ENCODE measurements at regions of chr4 and their contacts with region 1.

Region 1: DNA sequence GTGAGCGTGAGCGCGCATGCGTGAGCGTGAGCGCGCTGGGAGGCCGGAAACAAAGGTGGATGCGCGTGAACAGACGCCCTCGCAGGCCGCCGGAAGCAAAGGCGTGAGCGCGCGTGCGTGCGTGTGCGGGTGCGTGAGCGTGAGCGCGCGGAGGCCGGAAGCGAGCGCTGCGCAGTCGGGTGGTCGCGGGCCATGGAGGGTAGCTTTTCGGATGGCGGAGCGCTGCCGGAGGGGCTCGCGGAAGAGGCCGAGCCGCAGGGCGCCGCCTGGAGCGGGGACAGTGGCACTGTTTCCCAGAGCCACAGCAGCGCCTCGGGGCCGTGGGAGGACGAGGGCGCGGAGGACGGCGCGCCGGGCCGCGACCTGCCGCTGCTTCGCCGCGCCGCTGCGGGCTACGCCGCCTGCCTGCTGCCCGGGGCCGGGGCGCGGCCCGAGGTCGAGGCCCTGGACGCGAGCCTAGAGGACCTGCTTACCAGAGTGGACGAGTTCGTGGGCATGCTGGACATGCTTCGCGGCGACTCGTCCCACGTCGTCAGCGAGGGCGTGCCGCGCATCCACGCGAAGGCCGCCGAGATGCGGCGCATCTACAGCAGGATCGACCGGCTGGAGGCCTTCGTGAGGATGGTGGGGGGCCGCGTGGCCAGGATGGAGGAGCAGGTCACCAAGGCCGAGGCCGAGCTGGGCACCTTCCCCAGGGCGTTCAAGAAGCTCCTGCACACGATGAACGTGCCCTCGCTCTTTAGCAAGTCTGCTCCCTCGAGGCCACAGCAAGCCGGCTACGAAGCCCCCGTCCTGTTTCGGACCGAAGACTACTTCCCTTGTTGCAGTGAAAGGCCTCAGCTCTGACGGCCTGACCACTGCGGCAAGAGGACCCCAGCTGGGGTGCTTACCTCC is at the start of gene BLOC1S4:
- DNase-seq: peak; percentile 86
- ATAC-seq: peak; percentile 66
- H3K4me3 ChIP-seq: peak within 1 kb of the TSS; percentile 89
- H3K27ac ChIP-seq: peak within 1 kb of the TSS; percentile 54
- H3K4me1 ChIP-seq: peaks cover 9% of the 10 kb centered on the region
- H3K27me3 ChIP-seq: no peaks in the 10 kb centered on the region
- CTCF ChIP-seq: no peak
- total RNA-seq, gene BLOC1S4: 14.0 and 19.9 TPM in 2 replicates

Region 2: DNA sequence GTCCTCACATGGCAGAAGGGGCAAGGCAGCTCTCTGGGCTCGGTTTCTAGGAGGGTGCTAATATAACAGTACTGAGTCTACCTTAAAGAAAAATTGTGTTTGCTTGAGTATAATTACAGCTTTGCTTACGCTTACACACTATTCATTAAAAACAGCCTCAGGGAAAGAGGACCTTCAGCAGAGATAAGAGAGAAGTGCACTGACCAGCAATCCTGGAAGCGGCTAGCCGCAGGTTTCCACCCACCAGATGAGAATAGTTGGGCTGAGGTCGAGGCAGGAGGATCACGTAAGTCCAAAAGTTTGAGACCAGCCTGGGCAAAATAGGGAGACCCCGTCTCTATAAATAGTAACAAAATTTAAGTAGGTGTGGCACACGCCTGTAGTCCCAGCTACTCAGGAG is 91.0 kb before region 1 on chr4:
- CTCF ChIA-PET with region 1: no interaction called
- POLR2A ChIA-PET with region 1: no interaction called
- intact Hi-C with region 1: no loop called
- DNase-seq: no peak
- ATAC-seq: no peak
- H3K4me3 ChIP-seq: no peak overlapping the region
- H3K27ac ChIP-seq: no peak overlapping the region
- H3K4me1 ChIP-seq: no peaks in the 10 kb centered on the region
- H3K27me3 ChIP-seq: no peaks in the 10 kb centered on the region
- CTCF ChIP-seq: no peak

Region 3: DNA sequence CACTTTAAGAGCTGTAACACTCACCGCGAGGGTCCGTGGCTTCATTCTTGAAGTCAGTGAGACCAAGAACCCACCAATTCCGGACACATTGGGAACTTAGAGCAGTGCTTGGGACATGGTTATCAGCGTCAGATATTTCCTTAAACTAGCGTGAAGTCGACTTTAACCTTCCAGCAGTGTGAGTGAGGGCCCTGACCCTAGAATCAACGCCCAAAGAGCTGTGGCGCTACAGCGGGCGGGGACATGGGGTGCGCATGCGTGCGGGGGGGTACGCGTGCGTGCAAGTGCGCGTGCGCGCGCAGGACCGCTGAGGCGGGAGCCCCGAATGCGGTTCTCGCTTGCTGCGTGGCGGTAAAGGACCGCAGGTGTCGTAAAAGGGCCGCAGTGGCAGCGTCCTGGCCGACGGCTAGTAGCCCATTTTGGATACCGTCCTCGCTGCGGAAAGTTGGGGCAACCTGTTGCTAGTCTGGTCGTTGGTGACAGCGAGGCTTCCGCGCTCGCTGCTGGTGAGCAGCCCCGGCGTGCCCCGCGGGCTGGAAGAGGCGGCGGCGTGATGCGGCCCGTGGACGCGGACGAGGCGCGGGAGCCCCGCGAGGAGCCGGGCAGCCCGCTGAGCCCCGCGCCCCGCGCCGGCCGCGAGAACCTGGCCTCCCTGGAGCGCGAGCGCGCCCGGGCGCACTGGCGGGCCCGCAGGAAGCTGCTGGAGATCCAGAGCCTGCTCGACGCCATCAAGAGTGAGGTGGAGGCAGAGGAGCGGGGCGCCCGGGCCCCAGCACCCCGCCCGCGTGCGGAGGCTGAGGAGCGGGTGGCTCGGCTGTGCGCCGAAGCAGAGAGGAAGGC is 42.4 kb before region 1 on chr4:
- CTCF ChIA-PET with region 1: no interaction called
- POLR2A ChIA-PET with region 1: interaction called, 6 read pairs
- intact Hi-C with region 1: loop called (anchors 2 kb)
- DNase-seq: peak; percentile 91
- ATAC-seq: peak; percentile 74
- H3K4me3 ChIP-seq: peak overlapping the region; percentile 72
- H3K27ac ChIP-seq: peak overlapping the region; percentile 78
- H3K4me1 ChIP-seq: peaks cover 24% of the 10 kb centered on the region
- H3K27me3 ChIP-seq: no peaks in the 10 kb centered on the region
- CTCF ChIP-seq: no peak

Region 4: DNA sequence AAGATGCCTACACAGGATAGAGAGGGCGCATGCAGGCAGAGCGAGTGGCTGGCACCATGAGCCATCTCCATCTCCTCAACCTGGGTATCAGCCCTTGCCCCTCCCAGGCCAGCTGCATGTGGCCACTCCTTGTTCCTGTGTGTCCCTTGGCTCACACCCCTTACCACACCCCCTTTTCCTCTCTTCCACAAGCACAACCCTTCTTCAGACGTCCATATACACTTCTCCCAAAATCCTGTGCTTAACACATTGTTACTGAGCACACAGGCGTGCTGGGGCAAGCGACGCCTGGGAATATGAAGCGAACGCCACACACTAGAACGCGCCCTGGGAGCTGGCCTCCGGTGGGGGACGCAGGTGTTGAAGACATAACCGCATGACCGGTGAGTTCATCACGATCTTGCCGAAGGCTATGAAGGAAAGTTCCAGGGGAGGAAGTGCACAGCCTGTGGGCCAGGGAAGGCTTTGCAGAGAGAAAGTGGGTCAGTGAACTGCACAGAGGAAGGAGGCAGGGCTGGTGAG is 47.1 kb after region 1 on chr4:
- CTCF ChIA-PET with region 1: no interaction called
- POLR2A ChIA-PET with region 1: interaction called, 4 read pairs
- intact Hi-C with region 1: loop called (anchors 1 kb)
- DNase-seq: peak; percentile 90
- ATAC-seq: peak; percentile 76
- H3K4me3 ChIP-seq: peak overlapping the region; percentile 31; the same call in 1 of the 2 replicates
- H3K27ac ChIP-seq: peak overlapping the region; percentile 75
- H3K4me1 ChIP-seq: peaks cover 28% of the 10 kb centered on the region
- H3K27me3 ChIP-seq: no peaks in the 10 kb centered on the region
- CTCF ChIP-seq: peak; percentile 61

Region 5: DNA sequence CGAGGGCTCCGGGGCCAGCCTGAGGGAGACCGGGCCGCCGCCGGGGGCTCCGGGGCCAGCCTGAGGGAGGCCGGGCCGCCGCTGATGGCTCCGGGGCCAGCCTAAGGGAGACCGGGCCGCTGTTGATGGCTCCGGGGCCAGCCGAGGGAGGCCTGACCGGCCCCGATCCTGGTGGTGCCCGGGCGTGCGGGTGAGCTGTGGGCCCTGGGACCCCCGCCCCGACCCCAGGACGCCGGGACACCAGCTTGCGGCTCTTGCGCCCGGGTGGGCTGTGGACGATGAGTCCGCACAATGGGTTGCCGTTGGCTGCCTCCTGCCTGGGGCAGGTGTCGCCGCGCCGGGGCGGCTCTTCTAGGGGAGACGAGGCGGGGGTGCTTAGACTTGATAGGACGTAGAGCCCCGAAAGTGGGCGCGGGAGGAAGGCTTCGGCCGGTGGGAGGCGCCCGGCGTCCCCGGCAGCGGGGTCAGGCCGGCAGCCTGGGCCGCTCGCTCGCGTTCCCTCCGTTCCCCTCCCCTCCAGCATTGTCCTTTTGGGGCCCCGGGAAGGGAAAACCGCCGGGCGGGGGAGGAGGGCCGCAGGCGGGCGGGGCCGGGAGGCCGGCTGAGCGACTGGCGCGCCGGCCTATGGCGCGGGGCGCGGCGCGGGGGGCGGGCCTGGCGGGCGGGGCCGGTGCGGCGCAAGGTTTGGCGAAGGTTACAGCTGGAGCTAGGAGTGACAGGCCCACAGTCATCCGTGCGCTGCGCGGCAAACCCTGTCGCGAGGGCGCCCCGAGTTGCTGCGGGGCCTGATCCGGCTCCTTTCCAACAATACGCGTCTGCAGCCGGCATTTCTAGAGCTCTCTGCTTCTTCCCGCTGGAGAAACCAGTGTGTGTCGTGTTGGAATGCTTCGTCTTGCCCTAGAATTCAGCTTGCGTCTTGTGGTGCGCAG is 67.1 kb after region 1 on chr4:
- CTCF ChIA-PET with region 1: no interaction called
- POLR2A ChIA-PET with region 1: no interaction called
- intact Hi-C with region 1: loop called (anchors 5 kb)
- DNase-seq: peak; percentile 76
- ATAC-seq: peak; percentile 81
- H3K4me3 ChIP-seq: peak overlapping the region; percentile 71
- H3K27ac ChIP-seq: peak overlapping the region; percentile 52
- H3K4me1 ChIP-seq: no peaks in the 10 kb centered on the region; the same call in 1 of the 2 replicates
- H3K27me3 ChIP-seq: no peaks in the 10 kb centered on the region
- CTCF ChIP-seq: no peak

Region 6: DNA sequence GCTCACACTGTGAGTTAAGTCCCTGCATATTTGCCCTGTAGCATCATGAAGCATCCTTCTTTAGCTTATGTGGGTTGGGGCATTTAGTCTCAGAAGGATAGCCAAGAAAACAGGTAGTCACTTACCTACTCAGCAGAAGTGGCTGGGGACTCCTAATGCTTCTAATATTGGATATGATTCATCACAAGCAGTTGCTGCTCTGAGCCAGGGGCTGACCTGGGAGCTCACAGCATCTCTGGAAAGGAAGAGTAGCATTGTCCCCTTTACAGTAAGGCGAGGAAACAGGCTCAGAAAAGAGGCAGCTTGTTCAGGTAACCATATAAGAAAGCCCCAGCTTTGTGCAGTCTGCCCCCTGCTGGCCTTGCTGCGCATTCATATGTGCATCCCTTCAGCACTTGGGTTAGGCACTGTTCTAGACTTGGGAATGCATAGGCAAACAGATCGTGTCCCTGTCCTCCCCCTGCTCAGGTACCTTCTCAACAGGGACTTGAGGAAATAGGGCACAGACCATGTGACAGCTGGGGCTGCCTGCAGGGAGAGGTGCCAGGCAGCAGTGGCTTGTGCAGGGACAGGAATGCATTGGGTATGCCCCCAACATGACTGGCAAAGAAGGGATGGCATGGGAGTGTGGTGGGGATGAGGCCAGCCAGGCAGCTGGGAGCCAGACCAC is 157.7 kb after region 1 on chr4:
- CTCF ChIA-PET with region 1: interaction called, 6 read pairs
- POLR2A ChIA-PET with region 1: no interaction called
- intact Hi-C with region 1: loop called (anchors 1 kb)
- DNase-seq: peak; percentile 64
- ATAC-seq: peak; percentile 86
- H3K4me3 ChIP-seq: no peak overlapping the region
- H3K27ac ChIP-seq: no peak overlapping the region
- H3K4me1 ChIP-seq: no peaks in the 10 kb centered on the region
- H3K27me3 ChIP-seq: no peaks in the 10 kb centered on the region
- CTCF ChIP-seq: peak; percentile 80

Region 7: GRCh38 chr4:7081891-7082471 is 365.7 kb after region 1 on chr4:
- CTCF ChIA-PET with region 1: no interaction called
- POLR2A ChIA-PET with region 1: no interaction called
- intact Hi-C with region 1: loop called (anchors 5 kb)
- DNase-seq: peak; percentile 83
- ATAC-seq: peak; percentile 95
- H3K4me3 ChIP-seq: no peak overlapping the region
- H3K27ac ChIP-seq: no peak overlapping the region
- H3K4me1 ChIP-seq: 0 out of 2 replicates have a peak, but pooled peaks cover 2% of the 10 kb centered on the region
- H3K27me3 ChIP-seq: no peaks in the 10 kb centered on the region
- CTCF ChIP-seq: peak; percentile 74